ENCODE measurements at regions of chr17 and their contacts with region 1.

Region 1: GRCh38 chr17:63881876-63882601 is at the start of gene GH2:
- DNase-seq: no peak
- H3K4me3 ChIP-seq: no peak within 1 kb of the TSS
- H3K27ac ChIP-seq: no peak within 1 kb of the TSS
- H3K27me3 ChIP-seq: peaks cover 4% of the 10 kb centered on the region
- CTCF ChIP-seq: peak; percentile 58
- polyA plus RNA-seq, gene GH2: not detected in 2 replicates

Region 2: DNA sequence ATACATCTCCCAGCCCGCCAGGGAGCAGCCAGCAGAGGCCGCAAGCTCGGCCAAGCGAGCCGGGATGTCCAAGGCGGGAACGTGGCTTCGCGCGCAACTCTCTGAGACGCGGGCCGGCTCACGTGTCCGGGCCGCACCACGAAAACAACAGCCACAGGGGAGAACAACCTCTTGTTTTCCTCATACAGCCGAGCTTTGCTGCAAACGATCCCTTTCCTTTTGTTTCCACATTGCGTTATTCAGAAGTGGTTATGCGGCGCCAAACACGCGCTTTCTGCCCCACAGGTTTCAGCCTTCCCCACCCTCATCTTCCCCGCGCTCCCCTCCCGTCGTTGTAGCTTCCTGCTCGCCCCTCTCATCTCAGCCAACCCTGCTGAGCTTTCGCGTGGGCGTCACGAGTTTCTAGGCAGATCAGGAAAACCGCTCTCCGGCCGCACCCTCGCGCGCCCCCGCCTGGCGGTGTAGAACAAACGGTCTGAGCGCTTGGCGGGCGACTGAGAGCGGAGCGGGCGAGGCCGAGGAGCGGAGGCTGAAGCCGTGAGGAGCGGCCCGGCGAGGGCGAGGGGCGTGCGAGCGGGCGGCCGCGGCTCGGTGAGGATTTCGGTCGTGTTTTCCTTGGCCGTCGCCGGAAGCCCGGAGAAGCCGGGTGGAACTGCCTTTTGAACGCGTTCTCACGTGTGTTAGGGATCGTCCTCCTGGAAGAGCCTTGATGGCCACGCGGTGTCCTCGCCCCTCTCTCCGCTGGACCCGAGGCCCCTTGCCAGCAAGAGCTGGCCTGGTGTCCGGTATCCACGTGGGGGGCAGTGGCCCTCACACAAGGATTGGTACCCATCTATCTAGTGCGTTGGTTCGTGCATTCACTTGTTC is 33.0 kb before region 1 on chr17:
- CTCF ChIA-PET with region 1: interaction called, 10 read pairs
- POLR2A ChIA-PET with region 1: no interaction called
- DNase-seq: peak; percentile 37
- H3K4me3 ChIP-seq: peak overlapping the region; percentile 43
- H3K27ac ChIP-seq: no peak overlapping the region
- H3K27me3 ChIP-seq: peaks cover 16% of the 10 kb centered on the region
- CTCF ChIP-seq: peak; percentile 46